Heart right ventricle (tissue), 16 donors: ENCODE measurements at regions of chr11 and their contacts with region 1.

Region 1: GRCh38 chr11:17077520-17078401 is at the start of gene RPS13:
- DNase-seq: peak; percentile 94 to 98
- ATAC-seq: peak; percentile 97 to 100 (median 99)
- H3K4me3 ChIP-seq: peak within 1 kb of the TSS; percentile 73 to 97 (median 88)
- H3K27ac ChIP-seq: peak within 1 kb of the TSS; percentile 85 to 97 (median 94)
- H3K4me1 ChIP-seq: peaks cover 12 to 39% (median 30%) of the 10 kb centered on the region in 9 donors
- H3K27me3 ChIP-seq: no peaks in the 10 kb centered on the region
- CTCF ChIP-seq: no peak
- total RNA-seq, gene RPS13: 646 to 869 (median 686) TPM

Region 2: GRCh38 chr11:17276236-17277023 is 198.7 kb after region 1 on chr11 and contains the start of gene NUCB2:
- intact Hi-C with region 1: loop called in 1 of 10 experiments (anchors 2 kb)
- DNase-seq: peak; percentile 97 to 98
- ATAC-seq: peak; percentile 99
- H3K4me3 ChIP-seq: peak within 1 kb of the TSS; percentile 55 to 96 (median 91)
- H3K27ac ChIP-seq: peak within 1 kb of the TSS; percentile 87 to 97 (median 92)
- H3K4me1 ChIP-seq: peaks cover 0 to 39% (median 14%) of the 10 kb centered on the region in 9 donors
- H3K27me3 ChIP-seq: no peaks in the 10 kb centered on the region
- CTCF ChIP-seq: peak in 1 of 9 donors; percentile 8
- total RNA-seq, gene NUCB2: 78.8 to 175 (median 99.8) TPM